ENCODE measurements at regions of chr2 and their contacts with region 1.

Region 1: GRCh38 chr2:217223222-217223930 is 363.5 kb upstream of the TNP1 start:
- DNase-seq: peak; percentile 78
- H3K4me3 Mint-ChIP-seq: no peak overlapping the region
- H3K27ac Mint-ChIP-seq: peak overlapping the region; percentile 59
- H3K4me1 Mint-ChIP-seq: peaks cover 29% of the 10 kb centered on the region
- H3K27me3 Mint-ChIP-seq: peaks cover 28% of the 10 kb centered on the region

Region 2: GRCh38 chr2:216857131-216857550 is 366.2 kb before region 1 on chr2:
- CTCF ChIA-PET with region 1: no interaction called
- intact Hi-C with region 1: loop called (anchors 2 kb)
- DNase-seq: peak; percentile 31
- H3K4me3 Mint-ChIP-seq: no peak overlapping the region
- H3K27ac Mint-ChIP-seq: no peak overlapping the region
- H3K4me1 Mint-ChIP-seq: peaks cover 18% of the 10 kb centered on the region
- H3K27me3 Mint-ChIP-seq: no peaks in the 10 kb centered on the region

Region 3: GRCh38 chr2:217090024-217090473 is 133.3 kb before region 1 on chr2:
- CTCF ChIA-PET with region 1: no interaction called
- intact Hi-C with region 1: loop called (anchors 1 kb)
- DNase-seq: peak; percentile 46
- H3K4me3 Mint-ChIP-seq: no peak overlapping the region
- H3K27ac Mint-ChIP-seq: no peak overlapping the region
- H3K4me1 Mint-ChIP-seq: peaks cover 25% of the 10 kb centered on the region
- H3K27me3 Mint-ChIP-seq: peaks cover 16% of the 10 kb centered on the region

Region 4: DNA sequence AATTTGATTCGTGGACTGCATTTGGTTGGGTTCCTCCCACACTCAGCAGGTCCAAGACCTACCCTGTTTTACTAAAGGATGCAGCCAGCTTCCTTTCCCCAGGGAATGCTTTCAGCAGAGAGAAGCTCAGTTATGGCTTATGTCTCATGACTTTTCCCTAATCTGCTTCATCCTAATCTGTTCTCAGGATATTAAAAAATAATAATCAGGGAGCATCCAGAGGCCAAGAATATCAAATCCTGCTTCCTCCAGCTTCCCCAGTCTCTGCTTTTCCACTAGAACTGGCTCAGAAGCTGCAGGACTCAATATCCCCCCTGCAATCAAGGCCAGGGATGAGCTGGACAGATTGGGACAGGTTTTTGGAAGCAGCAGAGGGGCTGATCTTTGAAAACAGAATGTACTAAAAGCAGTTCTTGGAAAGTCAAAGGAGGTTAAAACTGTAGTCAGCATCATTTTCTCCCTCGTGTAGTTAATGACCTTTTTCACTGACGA is 36.7 kb before region 1 on chr2:
- CTCF ChIA-PET with region 1: no interaction called
- intact Hi-C with region 1: no loop called
- DNase-seq: no peak
- H3K4me3 Mint-ChIP-seq: no peak overlapping the region
- H3K27ac Mint-ChIP-seq: no peak overlapping the region
- H3K4me1 Mint-ChIP-seq: no peaks in the 10 kb centered on the region
- H3K27me3 Mint-ChIP-seq: no peaks in the 10 kb centered on the region

Region 5: DNA sequence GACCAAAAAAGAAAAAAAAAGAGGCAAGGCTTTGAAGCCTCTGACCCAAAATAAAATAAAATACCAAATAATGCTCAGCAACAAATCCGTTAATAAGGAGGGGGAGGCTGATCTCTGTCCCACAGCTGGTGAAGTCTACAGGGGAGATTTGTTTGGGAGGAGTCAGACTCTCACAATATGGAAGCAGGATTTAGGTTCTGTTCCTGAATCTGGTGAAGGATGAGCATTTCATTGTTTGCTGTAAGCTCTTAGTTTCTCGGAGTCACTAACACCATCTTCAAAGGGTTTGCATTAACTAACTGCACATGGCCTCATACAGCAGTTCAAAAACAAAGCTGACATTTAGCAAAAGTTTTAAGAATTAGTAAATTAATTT is 24.1 kb before region 1 on chr2:
- CTCF ChIA-PET with region 1: no interaction called
- intact Hi-C with region 1: no loop called
- DNase-seq: no peak
- H3K4me3 Mint-ChIP-seq: no peak overlapping the region
- H3K27ac Mint-ChIP-seq: no peak overlapping the region
- H3K4me1 Mint-ChIP-seq: no peaks in the 10 kb centered on the region
- H3K27me3 Mint-ChIP-seq: peaks cover 24% of the 10 kb centered on the region

Region 6: GRCh38 chr2:217610401-217611075 is 387.2 kb after region 1 on chr2:
- CTCF ChIA-PET with region 1: no interaction called
- intact Hi-C with region 1: loop called (anchors 1 kb)
- DNase-seq: peak; percentile 89
- H3K4me3 Mint-ChIP-seq: peak overlapping the region; percentile 25
- H3K27ac Mint-ChIP-seq: peak overlapping the region; percentile 84
- H3K4me1 Mint-ChIP-seq: peaks cover 54% of the 10 kb centered on the region
- H3K27me3 Mint-ChIP-seq: no peaks in the 10 kb centered on the region